PC-3 (cell line): ENCODE measurements at regions of chrX and their contacts with region 1.

Region 1: DNA sequence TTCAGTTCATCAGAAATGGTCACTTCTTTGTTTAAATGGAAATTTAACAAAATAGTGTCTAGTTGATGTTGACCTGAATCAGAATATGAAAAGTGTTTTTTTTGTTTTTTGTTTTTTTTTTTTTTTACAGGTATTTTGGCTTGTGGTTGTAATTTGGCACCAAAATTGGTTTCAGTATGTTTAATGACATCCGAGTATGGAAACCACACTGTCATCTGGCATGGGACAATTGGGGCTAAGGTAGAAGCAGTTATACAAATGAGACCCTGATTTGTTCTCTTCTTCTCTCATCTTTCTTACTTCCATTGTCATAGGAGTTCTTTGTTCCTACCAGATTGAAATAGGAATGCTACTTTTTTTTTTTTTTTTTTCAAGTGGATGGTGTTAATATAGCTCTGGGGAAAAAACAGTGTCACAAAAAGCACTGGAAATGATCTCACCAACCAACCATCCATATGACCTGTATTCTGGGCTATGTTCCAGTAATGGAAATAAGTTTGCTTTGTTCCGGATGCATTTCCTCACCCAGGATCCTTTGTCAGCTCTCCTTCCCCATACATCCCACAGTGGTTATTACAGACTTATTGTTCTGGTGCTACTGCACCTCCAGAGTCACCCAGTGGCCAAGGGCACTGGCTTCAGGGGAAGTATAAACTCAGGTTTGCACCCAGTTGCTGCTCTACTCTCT is 95.8 kb downstream of the ATXN3L start:
- DNase-seq: peak; percentile 94
- ATAC-seq: peak; percentile 96
- H3K4me3 ChIP-seq: no peak overlapping the region
- H3K27ac ChIP-seq: peak overlapping the region; percentile 87
- H3K4me1 ChIP-seq: peaks cover 39% of the 10 kb centered on the region
- H3K27me3 ChIP-seq: no peaks in the 10 kb centered on the region
- CTCF ChIP-seq: peak; percentile 30; the same call in 1 of the 2 replicates

Region 2: DNA sequence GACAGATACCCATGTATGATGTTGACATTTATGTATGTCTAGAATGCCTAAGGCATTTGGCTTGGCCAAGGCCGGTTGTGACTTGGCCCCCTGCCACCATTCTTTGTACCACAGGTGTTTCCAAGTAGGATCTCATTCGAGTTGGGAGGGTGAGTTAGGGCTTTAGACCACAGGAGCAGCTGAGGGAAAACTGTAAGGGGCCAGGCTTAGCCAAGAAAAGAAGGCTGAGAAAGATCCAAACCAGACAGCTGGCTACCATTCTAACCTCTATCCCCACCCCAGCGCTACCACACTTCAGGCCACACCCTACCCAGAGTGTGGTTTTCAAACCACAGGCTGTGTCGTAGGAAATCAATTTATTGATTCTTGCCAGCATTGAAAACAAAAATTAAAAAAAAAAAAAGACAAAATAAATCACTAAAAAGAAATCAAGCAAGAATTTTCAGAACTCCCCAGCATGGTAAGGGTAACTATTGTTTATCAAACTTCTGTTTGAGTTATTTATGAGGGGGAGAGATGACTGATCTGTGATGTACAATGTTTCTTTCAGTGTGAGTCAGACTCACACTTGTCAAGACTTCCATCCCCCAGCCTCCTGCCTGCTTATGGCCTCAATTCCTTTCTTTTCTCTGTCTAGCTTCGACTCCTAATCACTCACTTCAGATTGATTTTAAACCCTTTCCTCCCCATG is 239.2 kb before region 1 on chrX:
- CTCF ChIA-PET with region 1: no interaction called
- POLR2A ChIA-PET with region 1: no interaction called
- intact Hi-C with region 1: loop called (anchors 5 kb)
- DNase-seq: peak; percentile 95
- ATAC-seq: peak; percentile 56
- H3K4me3 ChIP-seq: peak overlapping the region; percentile 34; the same call in 1 of the 2 replicates
- H3K27ac ChIP-seq: peak overlapping the region; percentile 97
- H3K4me1 ChIP-seq: peaks cover 45% of the 10 kb centered on the region
- H3K27me3 ChIP-seq: no peaks in the 10 kb centered on the region
- CTCF ChIP-seq: no peak

Region 3: DNA sequence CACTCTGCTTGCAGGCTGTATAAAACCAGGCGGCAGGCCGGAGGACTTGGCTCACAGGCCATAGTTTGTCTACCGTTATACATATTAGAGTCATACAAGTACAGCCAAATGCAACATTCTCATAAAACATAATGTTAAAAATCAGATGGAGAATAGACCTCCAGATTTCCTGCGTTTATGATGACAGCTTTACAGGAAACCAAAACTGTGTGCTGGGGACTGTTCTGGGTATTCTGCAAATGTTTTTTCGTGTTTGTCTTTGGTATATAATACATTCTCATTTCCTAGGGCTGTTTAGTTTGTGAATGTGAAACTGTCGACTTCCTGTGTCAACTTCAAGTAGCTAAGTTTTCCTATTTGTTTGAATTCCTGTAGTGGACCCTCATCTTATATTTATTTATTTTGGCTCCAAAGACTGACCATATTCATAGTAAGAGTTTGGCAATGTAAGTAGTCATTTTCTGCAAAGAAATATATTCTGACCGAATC is 100.1 kb before region 1 on chrX:
- CTCF ChIA-PET with region 1: no interaction called
- POLR2A ChIA-PET with region 1: interaction called, 13 read pairs
- intact Hi-C with region 1: loop called (anchors 5 kb)
- DNase-seq: peak; percentile 68
- ATAC-seq: peak; percentile 83
- H3K4me3 ChIP-seq: peak overlapping the region; percentile 14; the same call in 1 of the 2 replicates
- H3K27ac ChIP-seq: peak overlapping the region; percentile 92
- H3K4me1 ChIP-seq: peaks cover 54% of the 10 kb centered on the region
- H3K27me3 ChIP-seq: no peaks in the 10 kb centered on the region
- CTCF ChIP-seq: no peak

Region 4: DNA sequence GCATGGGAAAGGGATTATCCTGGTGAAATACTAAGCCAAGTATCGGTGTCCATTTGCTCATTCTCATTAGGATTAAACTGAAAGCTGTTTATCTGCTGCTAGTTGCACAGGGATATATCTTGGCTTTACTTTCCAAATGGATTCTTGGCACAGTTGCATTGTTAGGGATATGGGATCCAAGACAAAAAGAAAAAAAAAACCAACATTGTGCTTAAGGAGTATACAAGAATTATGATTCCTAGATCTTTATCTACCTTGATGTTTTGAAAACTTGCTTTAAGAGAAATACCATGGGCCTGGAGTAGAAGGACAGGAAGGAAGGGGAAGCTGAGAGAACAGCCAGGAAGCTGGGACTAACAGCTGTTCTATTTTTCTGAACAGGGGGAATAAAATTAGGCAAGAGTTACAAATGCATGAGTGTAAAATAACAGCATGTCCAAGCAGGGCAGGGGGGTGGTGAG is 11.8 kb before region 1 on chrX:
- CTCF ChIA-PET with region 1: interaction called, 7 read pairs
- POLR2A ChIA-PET with region 1: interaction called, 12 read pairs
- intact Hi-C with region 1: no loop called
- DNase-seq: no peak
- ATAC-seq: no peak
- H3K4me3 ChIP-seq: no peak overlapping the region
- H3K27ac ChIP-seq: peak overlapping the region; percentile 11
- H3K4me1 ChIP-seq: peaks cover 22% of the 10 kb centered on the region
- H3K27me3 ChIP-seq: no peaks in the 10 kb centered on the region
- CTCF ChIP-seq: no peak

Region 5: DNA sequence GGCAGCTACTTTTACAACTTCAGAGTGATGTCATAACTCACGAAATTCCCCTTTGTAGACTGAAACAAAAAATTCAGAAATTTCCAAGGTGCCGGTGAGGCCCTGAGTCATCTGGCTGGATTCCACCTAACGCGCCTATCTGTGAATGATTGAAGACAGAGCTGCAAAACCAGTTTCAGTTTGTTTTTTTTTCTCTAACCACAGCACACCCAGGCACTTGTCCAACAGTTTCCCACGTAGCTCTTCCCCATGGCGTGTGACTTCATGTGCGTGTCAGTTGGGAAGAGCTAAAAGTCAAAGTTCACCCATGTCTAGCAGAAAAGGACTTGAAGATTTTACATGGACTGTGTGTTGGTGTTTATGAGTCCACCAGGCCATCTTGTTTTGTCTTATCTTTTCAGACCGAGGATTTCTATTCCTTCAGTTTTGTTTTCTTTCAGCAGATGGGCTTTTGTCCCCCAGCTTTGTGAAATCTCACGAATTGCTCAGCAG is 445.3 kb after region 1 on chrX:
- CTCF ChIA-PET with region 1: no interaction called
- POLR2A ChIA-PET with region 1: interaction called, 11 read pairs
- intact Hi-C with region 1: no loop called
- DNase-seq: peak; percentile 97
- ATAC-seq: peak; percentile 67
- H3K4me3 ChIP-seq: no peak overlapping the region
- H3K27ac ChIP-seq: peak overlapping the region; percentile 89
- H3K4me1 ChIP-seq: peaks cover 23% of the 10 kb centered on the region
- H3K27me3 ChIP-seq: no peaks in the 10 kb centered on the region
- CTCF ChIP-seq: no peak